CD4-positive, alpha-beta memory T cell (primary cell): ENCODE measurements at regions of chr1 and their contacts with region 1.

Region 1: GRCh38 chr1:205812878-205813754 is at the start of gene SLC41A1:
- DNase-seq: peak; percentile 90 to 96 (median 93)
- H3K4me3 ChIP-seq: peak within 1 kb of the TSS; percentile 71 to 88
- H3K4me3 Mint-ChIP-seq: peak within 1 kb of the TSS; percentile 91 to 96 (median 94)
- H3K27ac ChIP-seq: peak within 1 kb of the TSS; percentile 69
- H3K27ac Mint-ChIP-seq: peak within 1 kb of the TSS; percentile 82 to 95 (median 93)
- H3K4me1 ChIP-seq: peaks cover 54% of the 10 kb centered on the region
- H3K4me1 Mint-ChIP-seq: peaks cover 37 to 62% (median 49%) of the 10 kb centered on the region in 4 donors
- H3K27me3 ChIP-seq: no peaks in the 10 kb centered on the region
- H3K27me3 Mint-ChIP-seq: no peaks in the 10 kb centered on the region
- total RNA-seq, gene SLC41A1: 26.1 to 26.3 TPM

Region 2: GRCh38 chr1:205849619-205850355 is 36.7 kb after region 1 on chr1 and contains the start of gene PM20D1:
- CTCF ChIA-PET with region 1: interaction called, 3 read pairs
- POLR2A ChIA-PET with region 1: interaction called, 8 read pairs
- intact Hi-C with region 1: loop called (anchors 1 kb)
- DNase-seq: peak; percentile 82 to 93 (median 89)
- H3K4me3 ChIP-seq: peak within 1 kb of the TSS in 1 of 2 donors; percentile 28
- H3K4me3 Mint-ChIP-seq: peak within 1 kb of the TSS; percentile 91 to 96 (median 93)
- H3K27ac ChIP-seq: no peak within 1 kb of the TSS
- H3K27ac Mint-ChIP-seq: peak within 1 kb of the TSS; percentile 70 to 98 (median 94)
- H3K4me1 ChIP-seq: no peaks in the 10 kb centered on the region
- H3K4me1 Mint-ChIP-seq: peaks cover 7 to 16% (median 8%) of the 10 kb centered on the region in 4 donors
- H3K27me3 ChIP-seq: no peaks in the 10 kb centered on the region
- H3K27me3 Mint-ChIP-seq: no peaks in the 10 kb centered on the region
- total RNA-seq, gene PM20D1: 1.8 to 1.9 TPM